Spleen (tissue), 13 donors: ENCODE measurements at regions of chr18 and their contacts with region 1.

Region 1: DNA sequence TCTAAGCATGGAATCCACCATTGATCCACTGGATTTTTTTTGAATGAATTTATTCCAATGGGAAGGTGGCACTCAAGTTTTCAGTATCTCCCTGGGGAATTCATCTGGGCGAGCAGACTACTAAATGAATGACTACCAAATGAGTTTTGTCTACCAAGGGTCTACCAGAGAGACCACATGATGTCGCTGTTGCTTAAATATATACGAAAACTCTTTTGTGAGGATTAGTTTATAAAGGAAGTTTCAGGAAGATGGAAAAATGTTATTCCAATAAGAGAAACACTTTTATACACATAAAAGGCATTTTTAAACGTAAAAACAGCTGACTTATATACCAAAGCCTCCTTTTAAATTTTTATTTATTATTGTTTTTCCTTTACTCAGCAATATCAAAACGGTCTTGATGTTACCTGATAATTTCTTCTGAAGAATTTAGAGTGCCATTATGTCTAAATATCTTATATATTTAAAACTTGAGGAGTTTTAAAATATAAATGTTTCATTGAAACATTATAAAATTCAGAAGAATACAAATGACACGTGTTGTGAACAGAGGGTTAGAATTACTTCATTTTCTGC is 139.7 kb downstream of the HRH4 start:
- DNase-seq: no peak
- H3K4me3 ChIP-seq: no peak overlapping the region
- H3K27ac ChIP-seq: no peak overlapping the region
- H3K4me1 ChIP-seq: no peaks in the 10 kb centered on the region
- H3K27me3 ChIP-seq: peaks cover 0 to 14% (median 0%) of the 10 kb centered on the region in 7 donors
- CTCF ChIP-seq: peak in 8 of 11 experiments; percentile 39 to 73 (median 57)
- POLR2A ChIP-seq: no peak

Region 2: GRCh38 chr18:24734058-24734457 is 133.9 kb after region 1 on chr18:
- intact Hi-C with region 1: loop called (anchors 5 kb)
- DNase-seq: no peak
- H3K4me3 ChIP-seq: no peak overlapping the region
- H3K27ac ChIP-seq: no peak overlapping the region
- H3K4me1 ChIP-seq: no peaks in the 10 kb centered on the region
- H3K27me3 ChIP-seq: peaks cover 0 to 14% (median 0%) of the 10 kb centered on the region in 7 donors
- CTCF ChIP-seq: no peak
- POLR2A ChIP-seq: no peak